Sciatic nerve (tissue), 2 donors: ENCODE measurements at regions of chr1 and their contacts with region 1.

Region 1: GRCh38 chr1:203216274-203217138 is 13.0 kb downstream of the CHIT1 start:
- DNase-seq: peak; percentile 75
- ATAC-seq: peak; percentile 86

Region 2: DNA sequence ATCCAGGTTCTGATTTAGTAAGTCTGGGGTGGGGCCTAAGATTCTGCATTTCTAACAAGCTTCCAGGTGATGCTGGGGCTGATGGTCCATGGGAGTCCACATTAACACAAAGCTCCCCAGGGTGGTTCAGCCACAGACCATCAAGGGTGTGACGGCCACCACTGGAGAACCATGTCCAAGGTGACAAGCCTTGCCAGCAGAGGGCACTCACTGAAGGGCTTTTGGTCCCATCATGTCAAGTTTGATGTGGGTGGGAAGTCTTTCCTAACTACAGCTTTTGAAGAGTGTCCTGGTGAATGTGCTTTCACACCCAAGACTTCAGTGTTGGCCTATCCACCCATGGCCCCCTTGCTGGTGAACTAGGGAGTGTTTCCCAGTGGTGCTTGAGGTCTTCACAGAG is 941.9 kb before region 1 on chr1:
- intact Hi-C with region 1: no loop called
- DNase-seq: no peak
- ATAC-seq: no peak

Region 3: DNA sequence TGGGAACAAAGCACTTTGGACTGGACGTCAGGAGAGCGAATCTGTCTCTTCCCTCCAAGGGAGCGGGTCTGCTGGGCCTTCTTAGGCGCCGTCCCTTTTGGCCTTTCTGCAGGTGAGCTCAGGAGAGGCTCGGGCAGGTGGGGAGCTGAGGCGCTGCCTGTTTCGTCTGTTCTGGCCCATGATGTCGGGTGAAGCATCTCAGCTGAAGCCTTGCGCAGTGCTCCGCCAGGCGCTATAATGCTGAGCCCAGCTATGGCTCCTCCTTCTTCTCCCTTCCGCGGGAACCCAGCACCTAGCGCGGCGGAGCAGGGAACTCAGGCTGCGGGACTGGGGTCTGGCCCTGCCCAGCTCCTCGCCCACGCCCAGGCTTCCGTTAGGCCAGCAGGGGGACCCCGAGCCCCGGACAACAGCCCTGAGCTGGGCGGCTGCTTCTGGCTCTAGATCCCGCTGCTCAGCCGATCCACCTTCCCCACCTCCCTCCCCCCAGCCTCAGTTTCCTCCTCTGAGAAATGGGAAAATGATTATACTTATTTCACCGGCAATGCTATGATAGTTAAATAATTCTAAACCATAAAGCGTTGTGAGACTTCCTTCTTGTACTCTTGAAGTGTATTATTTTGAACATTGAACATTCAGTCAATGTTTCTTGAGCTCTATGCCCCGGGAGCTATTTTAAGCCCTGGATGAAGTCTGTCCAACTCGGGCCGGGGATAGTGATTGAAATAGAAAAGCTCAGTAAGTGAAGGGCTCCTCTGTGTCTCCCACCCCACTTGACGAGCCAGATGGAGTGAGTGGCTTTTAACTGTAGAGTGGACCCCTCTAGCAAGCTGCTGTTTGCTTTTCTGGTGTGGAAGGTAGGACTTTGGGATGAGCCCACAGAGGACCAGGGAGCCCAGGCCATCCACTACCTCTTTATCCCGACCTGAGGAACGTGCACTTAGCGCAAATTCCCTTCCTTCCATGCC is 98.6 kb before region 1 on chr1:
- intact Hi-C with region 1: loop called (anchors 5 kb)
- DNase-seq: peak; percentile 88
- ATAC-seq: peak; percentile 95

Region 4: GRCh38 chr1:203166566-203166940 is 50.0 kb before region 1 on chr1:
- intact Hi-C with region 1: no loop called
- DNase-seq: no peak
- ATAC-seq: peak; percentile 68

Region 5: DNA sequence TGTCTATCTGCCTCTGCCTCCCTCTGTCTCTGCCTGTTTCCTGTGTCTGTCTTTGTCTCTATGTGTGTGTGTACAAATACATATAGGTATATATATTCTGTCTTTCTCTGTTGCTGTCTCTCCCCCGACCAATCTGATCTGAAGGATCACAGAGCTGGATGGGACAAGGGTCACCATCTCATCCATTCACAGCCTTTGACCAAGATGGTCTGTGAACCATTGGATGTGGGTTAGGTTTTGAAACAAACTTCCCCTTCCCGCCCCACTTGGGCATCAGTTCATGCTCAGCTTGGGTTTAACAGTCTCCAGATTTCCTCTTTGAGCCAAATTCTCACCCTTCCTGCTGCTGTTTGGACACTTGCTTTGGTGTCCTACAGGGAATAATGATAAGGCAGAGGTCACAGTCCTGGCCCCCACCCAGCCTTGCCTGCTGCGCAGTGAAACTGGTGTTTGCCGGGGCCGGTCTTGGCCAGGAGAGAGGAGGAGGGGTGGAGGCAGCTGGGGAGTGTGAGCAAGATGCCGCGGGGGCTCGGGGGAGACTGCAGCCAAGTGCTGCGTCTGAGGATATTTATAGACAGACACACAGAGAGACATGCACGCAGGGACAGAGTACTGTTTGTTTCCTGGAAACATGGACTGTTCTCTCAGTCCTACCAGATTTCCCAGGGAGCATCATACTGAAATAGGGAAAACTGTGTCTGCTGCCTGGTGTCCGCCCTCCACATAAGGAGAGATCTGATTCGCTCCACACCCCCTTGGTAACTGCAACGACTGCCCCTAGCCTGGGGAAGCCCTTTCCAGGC is 61.8 kb after region 1 on chr1:
- intact Hi-C with region 1: no loop called
- DNase-seq: peak; percentile 91
- ATAC-seq: peak; percentile 91